Calu3 (cell line): ENCODE measurements at regions of chr9 and their contacts with region 1.

Region 1: DNA sequence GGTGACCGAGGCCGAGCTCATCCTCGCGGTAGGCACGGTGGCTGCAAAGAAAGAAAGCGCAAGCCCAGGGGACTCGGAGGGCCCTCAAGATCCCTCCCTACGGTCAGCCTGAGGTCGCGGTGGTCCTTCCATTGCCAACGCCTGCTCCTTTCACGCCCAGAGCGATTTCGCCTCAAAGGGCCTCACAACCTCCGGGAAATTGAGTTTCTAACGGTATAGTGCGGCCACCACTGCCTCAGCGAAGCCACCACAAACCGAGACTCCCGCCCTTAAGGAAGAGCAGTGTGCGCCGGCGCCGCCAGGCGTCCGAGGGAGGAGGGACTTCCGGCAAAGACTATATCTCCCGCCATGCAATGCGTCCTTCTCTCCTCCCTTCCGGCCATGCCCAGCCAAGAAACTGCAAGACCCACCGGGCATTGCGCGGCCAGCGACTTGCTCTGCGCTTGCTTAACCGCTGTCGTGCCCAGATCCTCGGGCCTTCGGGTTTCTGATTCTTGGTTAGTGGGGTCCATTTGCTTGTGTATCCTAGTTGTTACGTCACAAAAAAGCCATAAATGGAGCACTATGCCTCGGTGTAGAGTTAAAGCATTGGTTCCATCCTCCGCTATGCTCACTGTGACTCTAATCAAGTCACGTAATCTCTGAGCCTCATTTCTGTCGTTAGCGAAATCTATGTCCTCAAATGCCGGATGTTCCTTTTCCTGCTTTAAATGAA is at the start of gene HAUS6:
- DNase-seq: peak; percentile 88
- H3K4me3 Mint-ChIP-seq: peak within 1 kb of the TSS; percentile 88
- H3K27ac Mint-ChIP-seq: peak within 1 kb of the TSS; percentile 70
- H3K4me1 Mint-ChIP-seq: peaks cover 9% of the 10 kb centered on the region
- H3K27me3 Mint-ChIP-seq: no peaks in the 10 kb centered on the region
- CTCF ChIP-seq: peak; percentile 27
- total RNA-seq, gene HAUS6: 15.4 and 15.7 TPM in 2 replicates

Region 2: DNA sequence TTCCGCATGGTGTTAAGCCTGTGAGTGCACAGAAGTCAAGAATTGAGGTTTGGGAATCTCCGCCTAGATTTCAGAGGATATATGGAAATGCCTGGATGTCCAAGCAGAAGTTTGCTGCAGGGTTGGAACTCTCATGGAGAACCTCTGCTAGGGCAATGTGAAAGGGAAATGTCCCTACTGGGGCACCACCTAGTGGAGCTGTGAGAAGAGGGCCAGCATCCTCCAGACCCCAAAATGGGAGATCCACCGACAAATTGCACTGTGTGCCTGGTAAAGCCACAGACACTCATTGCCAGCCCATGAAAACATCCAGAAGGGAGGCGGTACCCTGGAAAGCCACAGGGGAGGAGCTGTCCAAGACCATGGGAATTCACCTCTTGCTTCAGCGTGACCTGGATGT is 66.2 kb before region 1 on chr9:
- CTCF ChIA-PET with region 1: no interaction called
- intact Hi-C with region 1: no loop called
- DNase-seq: no peak
- H3K4me3 Mint-ChIP-seq: no peak overlapping the region
- H3K27ac Mint-ChIP-seq: no peak overlapping the region
- H3K4me1 Mint-ChIP-seq: no peaks in the 10 kb centered on the region
- H3K27me3 Mint-ChIP-seq: no peaks in the 10 kb centered on the region
- CTCF ChIP-seq: no peak

Region 3: GRCh38 chr9:19161257-19162025 is 58.7 kb after region 1 on chr9:
- CTCF ChIA-PET with region 1: no interaction called
- intact Hi-C with region 1: loop called (anchors 2 kb)
- DNase-seq: peak; percentile 56
- H3K4me3 Mint-ChIP-seq: no peak overlapping the region
- H3K27ac Mint-ChIP-seq: peak overlapping the region; percentile 93
- H3K4me1 Mint-ChIP-seq: peaks cover 18% of the 10 kb centered on the region
- H3K27me3 Mint-ChIP-seq: no peaks in the 10 kb centered on the region
- CTCF ChIP-seq: no peak